AG04449 (cell line): ENCODE measurements at regions of chr2 and their contacts with region 1.

Region 1: DNA sequence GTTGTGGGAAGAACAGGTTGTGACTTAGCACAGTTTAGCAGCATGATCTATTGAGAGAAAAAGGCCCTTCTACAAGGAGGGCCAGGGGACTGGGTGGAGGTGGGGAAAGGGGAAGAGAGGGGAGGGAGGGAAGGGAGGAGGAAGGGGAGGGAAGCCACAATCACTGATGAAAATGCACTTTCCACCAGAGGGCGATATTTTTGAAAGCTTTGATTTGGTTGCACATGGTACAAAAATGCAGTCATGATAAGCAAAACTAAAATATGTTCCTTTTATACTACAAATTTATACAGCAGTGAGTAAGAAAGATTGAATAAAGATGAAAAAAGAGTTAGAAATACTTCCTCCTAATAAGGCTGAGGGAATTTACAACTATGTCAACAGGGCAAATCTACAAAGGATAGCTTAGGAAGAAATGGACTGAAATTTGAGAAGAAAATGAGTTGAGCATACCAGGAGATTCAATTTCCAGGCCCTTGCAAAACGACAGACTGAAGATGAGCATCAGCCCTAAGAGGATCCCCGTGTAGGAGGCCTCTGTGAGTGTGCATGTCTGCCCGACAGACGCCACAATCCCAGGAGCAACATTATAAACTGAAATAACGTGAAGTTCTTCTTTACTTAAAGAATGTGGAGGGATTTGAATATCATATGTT is 17.2 kb downstream of the SH3YL1 start:
- DNase-seq: peak; percentile 45
- H3K4me3 ChIP-seq: no peak overlapping the region
- CTCF ChIP-seq: peak; percentile 57

Region 2: GRCh38 chr2:193141-193671 is 53.4 kb before region 1 on chr2:
- CTCF ChIA-PET with region 1: no interaction called
- POLR2A ChIA-PET with region 1: no interaction called
- DNase-seq: no peak
- H3K4me3 ChIP-seq: no peak overlapping the region
- CTCF ChIP-seq: no peak

Region 3: GRCh38 chr2:260507-261161 is 14.0 kb after region 1 on chr2:
- CTCF ChIA-PET with region 1: interaction called, 42 read pairs
- POLR2A ChIA-PET with region 1: no interaction called
- DNase-seq: no peak
- H3K4me3 ChIP-seq: no peak overlapping the region
- CTCF ChIP-seq: no peak

Region 4: DNA sequence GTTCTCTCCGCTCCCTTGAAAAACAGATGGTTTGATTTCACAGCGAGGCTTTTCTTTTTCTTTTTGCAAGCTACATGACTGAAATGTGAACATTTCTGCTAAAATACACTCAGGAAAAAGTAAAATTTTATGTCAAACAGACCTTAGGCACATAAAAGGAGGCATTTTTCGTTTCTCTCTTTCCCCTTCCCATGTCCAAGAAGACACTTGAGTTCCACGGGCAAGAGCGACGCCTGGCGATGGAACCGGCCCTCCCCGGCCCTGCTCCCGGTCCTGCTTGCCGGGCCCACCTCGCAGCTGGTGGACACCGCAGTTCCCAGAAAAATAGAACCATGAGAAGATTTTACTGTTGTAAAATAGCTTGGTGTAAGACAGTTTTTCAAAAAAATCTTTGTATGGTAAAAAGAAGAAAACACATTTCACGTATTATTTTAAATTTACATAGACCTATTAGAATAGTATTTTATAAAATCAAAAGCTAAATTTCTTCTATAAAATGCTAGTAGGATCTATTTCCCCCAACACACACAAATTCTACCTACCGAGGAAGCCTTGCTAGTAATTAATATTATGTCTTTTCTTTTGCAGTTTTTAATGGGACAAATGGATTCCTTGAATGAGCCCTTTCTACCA is 43.6 kb after region 1 on chr2:
- CTCF ChIA-PET with region 1: interaction called, 99 read pairs
- POLR2A ChIA-PET with region 1: no interaction called
- DNase-seq: peak; percentile 5
- H3K4me3 ChIP-seq: peak overlapping the region; percentile 54
- CTCF ChIP-seq: peak; percentile 84